Calu3 (cell line): ENCODE measurements at regions of chr5 and their contacts with region 1.

Region 1: DNA sequence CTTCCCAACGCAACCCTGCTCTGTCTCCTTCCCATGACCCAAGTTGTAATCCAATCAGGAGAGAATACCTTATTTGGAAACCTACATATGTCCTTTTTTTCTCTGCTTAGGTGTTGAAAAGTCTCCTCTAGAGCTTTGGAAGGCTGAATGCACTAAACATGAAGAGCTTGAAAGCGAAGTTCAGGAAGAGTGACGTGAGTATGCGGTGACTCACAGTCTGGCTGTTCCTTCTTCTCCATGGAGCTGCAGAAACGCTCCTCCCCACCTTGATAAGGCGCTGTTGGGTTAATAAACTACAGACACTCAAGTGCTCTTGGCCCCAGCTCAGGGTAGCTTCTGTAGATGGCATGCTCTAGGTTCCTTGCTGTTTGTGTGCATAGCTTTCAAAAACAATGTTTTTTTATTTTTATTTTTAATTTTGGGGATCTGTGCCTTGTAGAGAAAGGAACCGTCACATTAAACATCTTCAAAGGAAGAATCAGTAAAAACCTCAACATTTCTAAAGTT is 30.7 kb downstream of the RAI14 start:
- DNase-seq: peak; percentile 84
- H3K4me3 Mint-ChIP-seq: peak overlapping the region; percentile 60
- H3K27ac Mint-ChIP-seq: peak overlapping the region; percentile 93
- H3K4me1 Mint-ChIP-seq: peaks cover 67% of the 10 kb centered on the region
- H3K27me3 Mint-ChIP-seq: no peaks in the 10 kb centered on the region
- CTCF ChIP-seq: no peak

Region 2: DNA sequence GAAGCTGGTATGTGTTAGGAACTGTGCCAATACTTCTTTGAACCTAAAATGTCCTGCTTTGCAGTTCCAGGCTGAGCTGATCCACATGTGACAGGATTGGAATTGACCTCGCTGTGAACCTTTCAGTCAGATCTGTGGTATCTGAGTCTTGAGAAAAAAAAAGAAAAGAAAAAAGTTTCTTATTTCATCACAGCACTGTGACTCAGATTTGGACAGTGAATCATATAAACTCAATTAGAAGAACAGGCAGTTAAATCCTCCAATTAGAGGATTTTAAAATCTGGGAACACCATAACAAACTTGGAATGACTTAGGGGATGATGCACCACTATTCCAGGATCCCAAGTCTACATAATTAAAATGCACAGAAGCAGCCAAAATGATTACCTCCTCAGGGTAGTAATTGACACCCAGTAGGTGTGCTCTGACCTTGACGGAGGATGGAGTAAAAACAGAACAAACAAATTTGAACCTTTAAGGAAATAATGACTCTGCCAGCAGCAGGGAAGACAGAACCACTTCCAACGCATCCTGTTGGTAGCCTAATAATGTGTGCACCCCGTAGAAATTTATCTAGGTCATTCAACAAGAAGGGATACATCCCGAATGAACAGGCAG is 88.5 kb before region 1 on chr5:
- CTCF ChIA-PET with region 1: interaction called, 3 read pairs
- intact Hi-C with region 1: loop called (anchors 5 kb)
- DNase-seq: peak; percentile 55
- H3K4me3 Mint-ChIP-seq: peak overlapping the region; percentile 14
- H3K27ac Mint-ChIP-seq: peak overlapping the region; percentile 85
- H3K4me1 Mint-ChIP-seq: peaks cover 42% of the 10 kb centered on the region
- H3K27me3 Mint-ChIP-seq: no peaks in the 10 kb centered on the region
- CTCF ChIP-seq: no peak